ENCODE measurements at regions of chr17 and their contacts with region 1.

Region 1: DNA sequence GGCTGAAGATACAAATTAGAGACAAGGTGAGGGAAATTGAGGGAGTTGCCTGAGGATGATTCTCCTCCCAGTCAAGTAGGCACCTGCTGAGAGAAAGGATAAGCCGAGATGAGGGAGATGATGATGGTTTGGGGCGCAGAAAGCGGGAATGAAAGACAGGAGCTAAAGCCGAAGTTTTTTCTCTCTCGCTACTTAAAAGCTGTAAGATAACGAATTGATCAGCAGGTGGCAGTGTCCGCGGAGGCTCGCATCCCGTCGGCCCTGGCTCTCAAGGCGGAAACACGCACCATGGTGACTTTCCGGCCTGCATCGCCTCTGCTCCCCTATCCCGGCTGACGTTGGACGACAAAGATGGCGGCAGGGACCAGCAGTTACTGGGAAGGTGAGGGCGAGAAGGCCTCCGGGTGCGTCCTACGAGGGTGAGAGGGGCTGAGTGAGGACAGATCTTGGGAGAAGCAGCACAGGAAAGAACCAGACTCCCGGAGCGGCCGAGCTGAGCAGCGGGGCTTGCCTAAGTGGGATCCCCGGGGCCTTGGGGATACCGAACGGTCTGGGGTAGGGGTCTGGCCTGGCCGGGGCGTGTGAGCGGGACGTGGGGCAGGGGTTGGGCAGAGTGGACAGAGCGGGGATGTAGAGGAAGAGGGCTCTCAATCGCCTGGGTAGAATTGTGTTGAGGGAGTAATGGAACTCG is at the start of gene GOSR1:
- DNase-seq: peak; percentile 82 to 97 (median 92)
- ATAC-seq: peak; percentile 97
- H3K4me3 ChIP-seq: peak within 1 kb of the TSS; percentile 65 to 68
- H3K4me3 Mint-ChIP-seq: peak within 1 kb of the TSS; percentile 99
- H3K27ac ChIP-seq: peak within 1 kb of the TSS; percentile 92 to 93
- H3K27ac Mint-ChIP-seq: peak within 1 kb of the TSS; percentile 99
- H3K4me1 ChIP-seq: peaks cover 23% of the 10 kb centered on the region
- H3K4me1 Mint-ChIP-seq: peaks cover 45% of the 10 kb centered on the region
- H3K27me3 ChIP-seq: no peaks in the 10 kb centered on the region
- H3K27me3 Mint-ChIP-seq: peaks cover 4% of the 10 kb centered on the region
- CTCF ChIP-seq: peak; percentile 72
- total RNA-seq, gene GOSR1: 45.2 to 48.0 TPM

Region 2: DNA sequence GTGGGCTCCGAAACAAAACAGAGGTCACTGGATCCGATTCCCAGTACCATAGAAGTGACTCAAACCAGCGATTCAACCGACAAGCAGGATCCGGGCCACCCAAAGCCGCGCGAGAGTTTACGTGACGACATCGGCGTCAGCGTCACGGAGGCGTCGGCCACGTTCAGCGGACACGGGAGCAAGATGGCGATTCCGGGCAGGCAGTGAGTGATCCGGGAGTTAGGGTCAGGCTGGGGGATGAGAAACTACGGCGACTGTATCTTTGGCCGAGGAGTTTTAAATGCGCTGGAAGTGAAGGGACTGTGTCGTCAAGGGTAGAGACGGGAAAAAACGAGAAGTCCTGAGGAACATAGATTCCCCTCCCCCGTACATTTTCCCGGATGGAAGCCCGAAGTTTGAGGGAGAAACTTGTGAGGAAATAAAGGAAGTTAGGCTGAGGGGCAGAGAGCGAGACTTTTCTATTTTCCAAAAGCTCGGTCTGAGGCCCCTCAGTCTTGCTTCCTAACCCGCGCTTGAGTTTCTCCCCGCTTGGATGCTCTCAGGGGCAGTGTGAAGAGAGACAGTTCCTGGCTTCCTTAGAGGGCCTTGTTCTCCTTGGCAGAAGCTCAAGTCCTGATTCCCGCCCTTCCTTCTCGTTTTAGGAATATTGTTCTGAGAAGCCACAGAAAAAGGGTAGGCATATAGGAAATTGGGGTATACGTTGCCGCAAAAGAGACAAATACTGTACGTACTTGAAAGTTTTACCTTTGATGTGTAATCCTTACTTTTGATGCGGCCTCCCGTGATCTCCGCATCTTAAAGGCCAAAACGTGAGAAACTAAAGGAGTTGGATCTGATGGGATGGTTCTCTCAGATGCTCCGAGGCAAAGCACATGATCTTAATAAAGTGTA is 360.3 kb before region 1 on chr17 and contains the start of gene NSRP1:
- CTCF ChIA-PET with region 1: no interaction called
- POLR2A ChIA-PET with region 1: no interaction called
- intact Hi-C with region 1: loop called (anchors 1 to 10 kb)
- DNase-seq: peak; percentile 83 to 96 (median 92)
- ATAC-seq: peak; percentile 97
- H3K4me3 ChIP-seq: peak within 1 kb of the TSS; percentile 66 to 96
- H3K4me3 Mint-ChIP-seq: peak within 1 kb of the TSS; percentile 100
- H3K27ac ChIP-seq: peak within 1 kb of the TSS; percentile 95 to 99
- H3K27ac Mint-ChIP-seq: peak within 1 kb of the TSS; percentile 100
- H3K4me1 ChIP-seq: peaks cover 16% of the 10 kb centered on the region
- H3K4me1 Mint-ChIP-seq: peaks cover 41% of the 10 kb centered on the region
- H3K27me3 ChIP-seq: no peaks in the 10 kb centered on the region
- H3K27me3 Mint-ChIP-seq: no peaks in the 10 kb centered on the region
- CTCF ChIP-seq: no peak
- total RNA-seq, gene NSRP1: 22.4 to 23.1 TPM

Region 3: GRCh38 chr17:30378824-30379302 is 98.4 kb before region 1 on chr17 and contains the start of gene CPD:
- CTCF ChIA-PET with region 1: interaction called, 3 read pairs
- POLR2A ChIA-PET with region 1: interaction called, 3 read pairs
- intact Hi-C with region 1: loop called (anchors 1 kb)
- DNase-seq: peak; percentile 92 to 99 (median 98)
- ATAC-seq: peak; percentile 93
- H3K4me3 ChIP-seq: peak within 1 kb of the TSS; percentile 51 to 76
- H3K4me3 Mint-ChIP-seq: peak within 1 kb of the TSS; percentile 88
- H3K27ac ChIP-seq: peak within 1 kb of the TSS; percentile 65 to 94
- H3K27ac Mint-ChIP-seq: peak within 1 kb of the TSS; percentile 93
- H3K4me1 ChIP-seq: peaks cover 53% of the 10 kb centered on the region
- H3K4me1 Mint-ChIP-seq: peaks cover 56% of the 10 kb centered on the region
- H3K27me3 ChIP-seq: no peaks in the 10 kb centered on the region
- H3K27me3 Mint-ChIP-seq: no peaks in the 10 kb centered on the region
- CTCF ChIP-seq: no peak
- total RNA-seq, gene CPD: 40.9 to 42.1 TPM

Region 4: GRCh38 chr17:30600049-30600829 is 123.0 kb after region 1 on chr17:
- CTCF ChIA-PET with region 1: no interaction called
- POLR2A ChIA-PET with region 1: no interaction called
- intact Hi-C with region 1: loop called in 1 of 2 experiments (anchors 2 kb)
- DNase-seq: peak; percentile 22 to 73 (median 51)
- ATAC-seq: peak; percentile 80
- H3K4me3 ChIP-seq: peak overlapping the region; percentile 69 to 76
- H3K4me3 Mint-ChIP-seq: peak overlapping the region; percentile 97
- H3K27ac ChIP-seq: peak overlapping the region; percentile 57 to 66
- H3K27ac Mint-ChIP-seq: peak overlapping the region; percentile 76
- H3K4me1 ChIP-seq: peaks cover 7% of the 10 kb centered on the region
- H3K4me1 Mint-ChIP-seq: peaks cover 19% of the 10 kb centered on the region
- H3K27me3 ChIP-seq: no peaks in the 10 kb centered on the region
- H3K27me3 Mint-ChIP-seq: no peaks in the 10 kb centered on the region
- CTCF ChIP-seq: peak; percentile 20

Region 5: GRCh38 chr17:30831663-30832437 is 354.6 kb after region 1 on chr17 and contains the start of gene ATAD5:
- CTCF ChIA-PET with region 1: no interaction called
- POLR2A ChIA-PET with region 1: no interaction called
- intact Hi-C with region 1: loop called (anchors 1 to 2 kb)
- DNase-seq: peak; percentile 70 to 94 (median 88)
- ATAC-seq: peak; percentile 99
- H3K4me3 ChIP-seq: peak within 1 kb of the TSS; percentile 80 to 95
- H3K4me3 Mint-ChIP-seq: peak within 1 kb of the TSS; percentile 97
- H3K27ac ChIP-seq: peak within 1 kb of the TSS in 1 of 2 experiments; percentile 41
- H3K27ac Mint-ChIP-seq: peak within 1 kb of the TSS; percentile 89
- H3K4me1 ChIP-seq: peaks cover 19% of the 10 kb centered on the region
- H3K4me1 Mint-ChIP-seq: peaks cover 23% of the 10 kb centered on the region
- H3K27me3 ChIP-seq: no peaks in the 10 kb centered on the region
- H3K27me3 Mint-ChIP-seq: no peaks in the 10 kb centered on the region
- CTCF ChIP-seq: no peak
- total RNA-seq, gene ATAD5: 3.6 to 3.8 TPM